ENCODE measurements at regions of chr19 and their contacts with region 1.

Region 1: DNA sequence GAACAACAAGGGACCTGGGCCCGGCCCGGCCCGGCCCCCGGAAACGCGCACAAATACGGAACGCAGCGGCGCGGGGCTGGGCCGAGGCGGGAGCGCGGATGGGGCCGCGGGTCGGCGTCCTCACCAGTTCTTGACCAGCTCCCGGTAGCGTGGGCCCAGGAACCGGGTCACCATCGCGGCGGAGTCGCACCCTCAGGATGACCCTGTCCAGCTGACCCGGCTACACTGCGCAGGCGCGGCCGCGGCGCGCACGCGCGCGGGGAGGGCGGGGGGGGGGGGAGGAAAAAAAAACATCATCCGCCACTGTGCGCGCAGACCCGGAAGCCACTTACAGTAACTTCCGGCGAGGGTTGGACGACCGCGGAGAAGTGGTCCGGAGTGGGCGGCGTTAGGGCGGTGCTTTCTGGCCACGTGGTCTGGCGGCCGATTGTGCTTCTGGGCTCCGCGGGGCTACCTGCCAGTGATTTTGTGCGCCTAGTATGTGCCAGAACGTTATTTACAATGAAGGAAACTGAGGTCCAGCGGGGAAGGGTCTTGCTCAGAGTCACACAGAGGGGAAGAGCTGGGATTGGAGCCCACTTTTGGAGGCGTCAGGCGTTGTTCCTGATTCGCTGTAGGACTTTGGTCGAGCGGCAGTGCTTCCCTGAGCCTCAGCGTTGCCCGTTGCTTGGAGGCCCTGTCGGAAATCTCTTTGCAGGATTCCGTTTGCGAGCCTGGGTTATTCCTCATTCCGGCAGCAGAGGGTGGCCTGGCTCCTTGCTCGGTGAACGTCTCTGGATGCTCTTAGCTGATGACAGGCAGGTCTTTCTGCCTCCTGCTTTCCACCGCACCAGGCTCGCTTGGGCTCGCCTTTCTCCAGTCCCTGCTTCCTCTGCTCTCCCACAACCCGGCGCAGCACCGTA is at the start of gene UQCR11:
- DNase-seq: peak; percentile 87
- ATAC-seq: peak; percentile 88
- H3K4me3 Mint-ChIP-seq: peak within 1 kb of the TSS; percentile 93
- H3K27ac Mint-ChIP-seq: peak within 1 kb of the TSS; percentile 96
- H3K4me1 Mint-ChIP-seq: peaks cover 49% of the 10 kb centered on the region
- H3K27me3 Mint-ChIP-seq: no peaks in the 10 kb centered on the region
- CTCF ChIP-seq: no peak
- total RNA-seq, gene UQCR11: 117 and 141 TPM in 2 replicates

Region 2: GRCh38 chr19:1275260-1275975 is 330.1 kb before region 1 on chr19 and contains the start of gene FAM174C:
- CTCF ChIA-PET with region 1: no interaction called
- POLR2A ChIA-PET with region 1: no interaction called
- intact Hi-C with region 1: loop called (anchors 1 kb)
- DNase-seq: peak; percentile 87
- ATAC-seq: peak; percentile 83
- H3K4me3 Mint-ChIP-seq: peak within 1 kb of the TSS; percentile 84
- H3K27ac Mint-ChIP-seq: peak within 1 kb of the TSS; percentile 88
- H3K4me1 Mint-ChIP-seq: peaks cover 51% of the 10 kb centered on the region
- H3K27me3 Mint-ChIP-seq: no peaks in the 10 kb centered on the region
- CTCF ChIP-seq: no peak
- total RNA-seq, gene FAM174C: 47.9 and 52.0 TPM in 2 replicates

Region 3: GRCh38 chr19:1560286-1560882 is 45.1 kb before region 1 on chr19:
- CTCF ChIA-PET with region 1: no interaction called
- POLR2A ChIA-PET with region 1: no interaction called
- intact Hi-C with region 1: no loop called
- DNase-seq: no peak
- ATAC-seq: no peak
- H3K4me3 Mint-ChIP-seq: no peak overlapping the region
- H3K27ac Mint-ChIP-seq: no peak overlapping the region
- H3K4me1 Mint-ChIP-seq: no peaks in the 10 kb centered on the region
- H3K27me3 Mint-ChIP-seq: no peaks in the 10 kb centered on the region
- CTCF ChIP-seq: no peak

Region 4: DNA sequence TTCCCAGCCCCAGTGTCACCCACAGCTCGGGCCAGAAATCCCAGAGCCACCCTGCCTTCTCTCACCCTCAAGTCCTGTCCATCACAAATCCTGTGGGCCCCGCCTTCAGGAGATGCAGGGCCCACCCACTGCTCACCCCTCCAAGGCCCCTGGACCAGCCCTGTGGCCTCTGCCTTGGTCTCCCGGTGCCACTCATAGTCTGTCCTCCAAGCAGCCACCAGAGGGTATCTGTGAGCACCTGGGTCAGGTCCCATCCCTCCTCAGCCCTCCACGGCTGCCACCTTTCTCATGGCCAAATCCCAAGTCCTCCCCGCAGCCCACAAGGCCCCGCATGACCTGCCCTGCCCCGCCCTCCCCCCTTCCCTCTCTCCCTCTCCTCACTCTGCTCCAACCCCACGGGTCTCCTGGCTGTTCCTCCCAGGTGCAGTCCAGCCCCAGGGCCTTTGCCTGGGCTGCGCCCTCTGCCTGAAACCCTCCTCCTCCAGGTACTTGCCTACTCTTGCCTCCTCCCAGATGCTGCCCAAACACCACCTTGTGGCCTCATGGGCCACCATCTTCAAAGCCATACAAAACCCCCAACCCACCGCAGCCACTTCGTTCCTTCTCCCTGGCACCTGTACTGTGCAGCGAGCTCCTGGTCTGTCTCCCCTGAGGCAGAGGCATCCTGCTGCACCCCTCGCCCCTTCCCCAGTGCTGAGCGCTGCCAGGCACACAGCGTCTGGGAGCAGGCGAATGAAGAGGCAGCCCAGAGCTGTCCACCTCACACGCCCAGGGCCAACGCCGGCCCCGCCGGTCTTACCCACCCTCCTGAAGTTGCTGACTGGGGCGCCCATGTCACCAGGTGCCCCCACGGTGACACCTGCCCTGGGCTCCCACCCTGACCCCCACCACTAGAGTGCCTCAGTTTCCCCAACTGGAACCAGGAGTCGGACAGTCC is 12.9 kb after region 1 on chr19:
- CTCF ChIA-PET with region 1: no interaction called
- POLR2A ChIA-PET with region 1: interaction called, 8 read pairs
- intact Hi-C with region 1: loop called (anchors 1 kb)
- DNase-seq: no peak
- ATAC-seq: peak; percentile 72
- H3K4me3 Mint-ChIP-seq: no peak overlapping the region
- H3K27ac Mint-ChIP-seq: peak overlapping the region; percentile 70
- H3K4me1 Mint-ChIP-seq: peaks cover 33% of the 10 kb centered on the region
- H3K27me3 Mint-ChIP-seq: no peaks in the 10 kb centered on the region
- CTCF ChIP-seq: no peak

Region 5: GRCh38 chr19:1665565-1666047 is 60.1 kb after region 1 on chr19:
- CTCF ChIA-PET with region 1: no interaction called
- POLR2A ChIA-PET with region 1: interaction called, 12 read pairs
- intact Hi-C with region 1: no loop called
- DNase-seq: peak; percentile 35
- ATAC-seq: peak; percentile 9
- H3K4me3 Mint-ChIP-seq: peak overlapping the region; percentile 55
- H3K27ac Mint-ChIP-seq: peak overlapping the region; percentile 79
- H3K4me1 Mint-ChIP-seq: peaks cover 73% of the 10 kb centered on the region
- H3K27me3 Mint-ChIP-seq: no peaks in the 10 kb centered on the region
- CTCF ChIP-seq: no peak

Region 6: DNA sequence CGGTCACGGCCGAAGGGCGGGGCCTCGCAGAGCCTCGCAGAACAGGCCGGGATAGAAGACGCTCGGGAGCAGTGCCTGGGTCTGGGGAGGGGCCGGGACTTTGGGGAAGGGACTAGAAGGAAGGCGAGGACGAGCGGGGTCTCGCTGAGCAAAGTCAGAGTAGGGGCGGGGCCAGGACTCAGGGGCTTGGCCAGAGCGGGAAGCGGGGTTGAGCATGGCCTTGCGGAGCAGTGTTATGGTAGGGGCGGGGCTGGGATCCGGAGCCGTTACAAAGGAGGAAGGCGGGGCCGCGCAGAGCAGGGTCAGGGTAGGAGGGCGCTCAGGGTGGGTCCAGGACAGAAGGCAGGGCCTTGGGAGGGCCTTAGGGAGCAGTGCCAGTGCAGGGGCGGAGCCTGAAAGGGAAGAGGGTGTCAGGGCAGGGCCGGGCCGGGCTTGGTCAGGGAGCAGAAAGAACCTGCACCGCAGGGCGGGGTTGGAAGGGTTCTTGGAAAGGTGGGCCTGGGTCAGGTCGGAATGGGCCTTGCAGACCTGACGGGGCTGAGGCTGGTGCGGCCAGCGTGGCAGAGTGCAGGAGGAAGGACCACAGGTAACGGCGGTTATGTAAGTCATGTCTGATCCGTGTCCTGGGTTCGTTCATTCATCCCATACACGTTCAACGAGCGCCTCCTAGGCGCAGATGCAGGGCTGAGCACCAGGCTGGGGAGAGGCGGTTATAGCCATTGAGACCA is 207.1 kb after region 1 on chr19:
- CTCF ChIA-PET with region 1: no interaction called
- POLR2A ChIA-PET with region 1: no interaction called
- intact Hi-C with region 1: loop called (anchors 1 kb)
- DNase-seq: peak; percentile 82
- ATAC-seq: peak; percentile 81
- H3K4me3 Mint-ChIP-seq: peak overlapping the region; percentile 96
- H3K27ac Mint-ChIP-seq: peak overlapping the region; percentile 90
- H3K4me1 Mint-ChIP-seq: peaks cover 14% of the 10 kb centered on the region
- H3K27me3 Mint-ChIP-seq: no peaks in the 10 kb centered on the region
- CTCF ChIP-seq: no peak